ENCODE measurements at regions of chr20 and their contacts with region 1.

Region 1: GRCh38 chr20:53869466-53870258 is 200.7 kb downstream of the BCAS1 start:
- DNase-seq: peak; percentile 98
- ATAC-seq: peak; percentile 71
- H3K4me3 ChIP-seq: peak overlapping the region; percentile 3; the same call in 1 of the 2 replicates
- H3K27ac ChIP-seq: peak overlapping the region; percentile 87
- H3K4me1 ChIP-seq: peaks cover 73% of the 10 kb centered on the region
- H3K27me3 ChIP-seq: no peaks in the 10 kb centered on the region
- CTCF ChIP-seq: peak; percentile 99

Region 2: DNA sequence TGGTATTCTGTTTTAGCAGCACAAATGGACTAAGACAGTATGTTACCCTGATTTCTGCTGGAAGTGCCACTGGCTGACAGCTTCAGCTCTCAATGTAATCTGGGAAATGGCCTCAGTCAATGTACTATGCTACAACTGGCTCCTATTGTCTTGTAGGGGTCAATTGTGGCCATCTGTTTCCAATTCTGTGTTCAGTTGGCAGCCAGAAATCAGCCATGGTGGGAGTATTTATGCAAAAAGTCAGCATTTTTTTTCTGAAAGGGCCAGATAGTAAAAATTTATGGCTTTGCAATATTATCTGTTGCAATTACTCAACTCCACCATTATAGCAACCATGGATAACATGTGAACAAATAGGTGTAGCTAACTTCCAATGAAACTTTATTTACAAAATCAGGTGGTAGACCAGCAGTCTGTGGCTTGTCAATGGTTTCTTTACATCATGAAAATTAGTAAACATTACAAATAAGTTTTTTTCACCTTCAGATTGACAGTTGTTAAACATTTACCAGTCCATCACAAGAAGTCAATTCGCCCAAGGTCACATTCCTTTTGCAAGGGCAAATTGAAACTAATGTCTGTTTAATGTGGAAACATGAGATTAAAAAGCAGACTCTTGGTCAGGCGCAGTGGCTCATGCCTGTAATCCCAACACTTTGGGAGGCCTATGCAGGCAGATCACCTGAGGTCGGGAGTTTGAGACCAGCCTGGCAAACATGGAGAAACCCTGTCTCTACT is 955.8 kb before region 1 on chr20:
- CTCF ChIA-PET with region 1: no interaction called
- POLR2A ChIA-PET with region 1: no interaction called
- intact Hi-C with region 1: no loop called
- DNase-seq: no peak
- ATAC-seq: no peak
- H3K4me3 ChIP-seq: no peak overlapping the region
- H3K27ac ChIP-seq: no peak overlapping the region
- H3K4me1 ChIP-seq: no peaks in the 10 kb centered on the region
- H3K27me3 ChIP-seq: no peaks in the 10 kb centered on the region
- CTCF ChIP-seq: no peak

Region 3: GRCh38 chr20:53262294-53262859 is 607.3 kb before region 1 on chr20:
- CTCF ChIA-PET with region 1: no interaction called
- POLR2A ChIA-PET with region 1: no interaction called
- intact Hi-C with region 1: no loop called
- DNase-seq: peak; percentile 16
- ATAC-seq: no peak
- H3K4me3 ChIP-seq: no peak overlapping the region
- H3K27ac ChIP-seq: no peak overlapping the region
- H3K4me1 ChIP-seq: no peaks in the 10 kb centered on the region
- H3K27me3 ChIP-seq: peaks cover 95% of the 10 kb centered on the region
- CTCF ChIP-seq: no peak

Region 4: DNA sequence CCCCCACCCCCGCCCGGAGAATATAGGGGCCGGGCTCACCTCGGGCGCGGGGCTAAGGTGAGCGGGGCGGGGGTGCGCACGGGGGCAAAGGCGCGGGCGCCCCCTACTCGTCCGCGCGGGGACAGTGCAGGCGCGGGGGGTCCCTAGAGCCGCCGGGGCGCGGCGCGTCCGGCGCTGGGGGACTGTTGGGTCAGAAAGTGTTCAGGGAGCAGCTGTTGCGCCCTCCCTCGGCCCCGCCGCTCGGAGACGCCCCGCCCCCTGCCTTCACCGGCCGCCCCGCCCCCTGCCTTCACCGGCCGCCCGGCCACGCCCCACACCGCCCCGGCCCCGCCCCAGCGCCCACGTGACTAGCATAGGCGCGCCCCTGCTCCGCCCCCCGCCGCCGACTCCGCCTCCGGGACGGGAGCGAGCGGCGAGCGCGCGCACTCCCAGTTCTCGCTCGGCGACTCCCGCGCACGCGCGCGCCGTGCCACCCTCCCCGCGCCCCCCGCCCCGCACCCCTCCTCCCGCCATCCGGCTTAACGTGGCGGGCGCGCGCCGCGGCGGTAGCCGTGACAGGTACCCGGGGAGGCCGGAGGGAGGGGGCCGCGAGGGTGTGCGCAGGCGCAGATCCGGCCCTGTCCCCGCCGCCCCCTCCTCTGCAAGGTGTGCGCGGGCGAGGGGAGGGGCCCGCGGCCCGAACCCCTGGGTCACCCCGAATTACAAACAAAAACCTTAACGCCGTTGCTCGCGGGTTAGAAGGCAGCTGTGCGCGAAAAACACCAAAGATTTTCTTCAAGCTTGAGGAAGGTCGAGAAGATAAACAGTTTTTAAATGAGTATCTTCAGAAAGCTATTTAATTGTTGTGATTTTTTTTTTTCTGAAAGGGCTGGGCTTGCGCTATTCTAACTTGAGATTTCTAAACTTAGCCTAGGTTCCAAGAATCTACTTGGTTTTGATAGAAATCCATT is 275.3 kb before region 1 on chr20:
- CTCF ChIA-PET with region 1: no interaction called
- POLR2A ChIA-PET with region 1: no interaction called
- intact Hi-C with region 1: loop called (anchors 5 kb)
- DNase-seq: peak; percentile 98
- ATAC-seq: peak; percentile 69
- H3K4me3 ChIP-seq: peak overlapping the region; percentile 88
- H3K27ac ChIP-seq: peak overlapping the region; percentile 65
- H3K4me1 ChIP-seq: peaks cover 41% of the 10 kb centered on the region
- H3K27me3 ChIP-seq: no peaks in the 10 kb centered on the region
- CTCF ChIP-seq: no peak

Region 5: GRCh38 chr20:53773792-53774401 is 95.8 kb before region 1 on chr20:
- CTCF ChIA-PET with region 1: no interaction called
- POLR2A ChIA-PET with region 1: interaction called, 4 read pairs
- intact Hi-C with region 1: loop called (anchors 1 kb)
- DNase-seq: peak; percentile 100
- ATAC-seq: peak; percentile 75
- H3K4me3 ChIP-seq: peak overlapping the region; percentile 54
- H3K27ac ChIP-seq: peak overlapping the region; percentile 92
- H3K4me1 ChIP-seq: peaks cover 48% of the 10 kb centered on the region
- H3K27me3 ChIP-seq: no peaks in the 10 kb centered on the region
- CTCF ChIP-seq: no peak

Region 6: DNA sequence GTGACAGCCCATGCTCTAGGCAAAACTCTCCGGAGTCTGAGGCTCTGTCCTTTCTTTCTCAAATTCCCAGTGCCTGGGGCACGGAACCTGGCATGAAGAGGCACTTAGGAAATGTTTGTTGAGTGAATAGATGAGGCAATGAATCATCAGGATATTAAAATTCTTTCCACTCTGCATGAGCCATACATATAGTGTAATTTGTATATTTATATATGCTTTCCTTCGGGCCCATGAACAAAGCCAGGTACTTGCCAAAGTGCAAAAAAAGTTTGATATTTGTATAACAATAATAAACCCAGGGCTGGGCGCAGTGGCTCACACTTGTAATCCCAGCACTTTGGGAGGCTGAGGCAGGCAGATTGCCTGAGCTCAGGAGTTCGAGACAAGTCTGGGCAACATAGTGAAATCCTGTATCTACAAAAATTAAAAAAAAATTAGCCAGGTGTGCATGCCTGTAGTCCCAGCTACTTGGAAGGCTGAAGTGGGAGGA is 63.7 kb before region 1 on chr20:
- CTCF ChIA-PET with region 1: no interaction called
- POLR2A ChIA-PET with region 1: interaction called, 7 read pairs
- intact Hi-C with region 1: loop called (anchors 2 kb)
- DNase-seq: peak; percentile 100
- ATAC-seq: peak; percentile 82
- H3K4me3 ChIP-seq: no peak overlapping the region
- H3K27ac ChIP-seq: peak overlapping the region; percentile 89
- H3K4me1 ChIP-seq: peaks cover 50% of the 10 kb centered on the region
- H3K27me3 ChIP-seq: no peaks in the 10 kb centered on the region
- CTCF ChIP-seq: no peak

Region 7: DNA sequence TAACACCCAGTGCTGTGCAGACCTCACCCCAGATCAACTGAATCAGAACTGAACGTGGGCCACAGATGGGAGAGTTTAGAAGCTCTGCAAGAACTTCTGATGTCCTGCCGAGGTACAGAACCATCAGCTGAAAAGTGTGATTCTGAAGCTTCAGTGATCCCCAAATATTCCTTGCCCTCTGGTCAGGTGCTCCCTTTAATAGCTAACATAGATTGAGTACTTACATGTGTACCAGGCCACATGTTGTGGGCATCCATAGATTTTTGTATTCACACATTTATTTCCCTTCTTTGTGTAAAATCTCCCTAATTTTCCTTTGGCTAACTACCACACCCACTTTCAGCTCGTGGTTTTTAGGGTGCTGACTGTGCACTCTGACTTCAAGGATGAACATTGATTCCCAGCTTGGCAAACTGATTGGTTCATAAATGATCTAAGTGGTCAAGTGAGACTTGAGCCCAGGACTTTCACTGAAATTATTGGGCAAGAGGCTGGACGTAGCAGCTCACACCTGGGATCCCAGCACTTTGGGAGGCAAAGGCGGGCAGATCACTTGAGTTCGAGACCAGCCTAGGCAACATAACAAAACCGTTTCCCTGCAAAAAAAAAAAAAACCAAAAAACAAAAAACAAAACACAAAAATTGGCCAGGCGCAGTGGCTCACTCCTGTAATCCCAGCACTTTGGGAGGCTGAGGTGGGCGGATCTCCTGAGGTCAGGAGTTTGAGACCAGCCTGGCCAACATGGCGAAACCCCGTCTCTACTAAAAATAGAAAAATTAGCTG is 38.5 kb after region 1 on chr20:
- CTCF ChIA-PET with region 1: interaction called, 5 read pairs
- POLR2A ChIA-PET with region 1: no interaction called
- intact Hi-C with region 1: loop called (anchors 2 kb)
- DNase-seq: no peak
- ATAC-seq: no peak
- H3K4me3 ChIP-seq: no peak overlapping the region
- H3K27ac ChIP-seq: peak overlapping the region; percentile 91
- H3K4me1 ChIP-seq: peaks cover 37% of the 10 kb centered on the region
- H3K27me3 ChIP-seq: no peaks in the 10 kb centered on the region
- CTCF ChIP-seq: no peak

Measured in PC-3 (cell line).